T-cell (primary cell): ENCODE measurements at regions of chr18 and their contacts with region 1.

Region 1: GRCh38 chr18:62883937-62884735 is 168.8 kb downstream of the PHLPP1 start:
- DNase-seq: no peak
- ATAC-seq: no peak
- H3K4me3 ChIP-seq: no peak overlapping the region
- H3K4me3 Mint-ChIP-seq: no peak overlapping the region
- H3K27ac ChIP-seq: no peak overlapping the region
- H3K27ac Mint-ChIP-seq: no peak overlapping the region
- H3K4me1 ChIP-seq: peaks cover 3 to 4% of the 10 kb centered on the region in 2 experiments
- H3K4me1 Mint-ChIP-seq: peaks cover 8 to 12% (median 10%) of the 10 kb centered on the region in 3 donors
- H3K27me3 ChIP-seq: no peaks in the 10 kb centered on the region
- H3K27me3 Mint-ChIP-seq: no peaks in the 10 kb centered on the region

Region 2: GRCh38 chr18:62300359-62300963 is 583.7 kb before region 1 on chr18:
- CTCF ChIA-PET with region 1: no interaction called
- POLR2A ChIA-PET with region 1: interaction called in 1 of 2 experiments, 10 read pairs
- DNase-seq: peak in 1 of 35 experiments; percentile 1
- ATAC-seq: peak in 2 of 4 experiments; percentile 17 to 70
- H3K4me3 ChIP-seq: no peak overlapping the region
- H3K4me3 Mint-ChIP-seq: peak overlapping the region in 1 of 3 donors; percentile 44
- H3K27ac ChIP-seq: no peak overlapping the region
- H3K27ac Mint-ChIP-seq: peak overlapping the region; percentile 50 to 82
- H3K4me1 ChIP-seq: peaks cover 0 to 14% of the 10 kb centered on the region in 2 experiments
- H3K4me1 Mint-ChIP-seq: peaks cover 12 to 22% (median 20%) of the 10 kb centered on the region in 3 donors
- H3K27me3 ChIP-seq: no peaks in the 10 kb centered on the region
- H3K27me3 Mint-ChIP-seq: no peaks in the 10 kb centered on the region

Region 3: DNA sequence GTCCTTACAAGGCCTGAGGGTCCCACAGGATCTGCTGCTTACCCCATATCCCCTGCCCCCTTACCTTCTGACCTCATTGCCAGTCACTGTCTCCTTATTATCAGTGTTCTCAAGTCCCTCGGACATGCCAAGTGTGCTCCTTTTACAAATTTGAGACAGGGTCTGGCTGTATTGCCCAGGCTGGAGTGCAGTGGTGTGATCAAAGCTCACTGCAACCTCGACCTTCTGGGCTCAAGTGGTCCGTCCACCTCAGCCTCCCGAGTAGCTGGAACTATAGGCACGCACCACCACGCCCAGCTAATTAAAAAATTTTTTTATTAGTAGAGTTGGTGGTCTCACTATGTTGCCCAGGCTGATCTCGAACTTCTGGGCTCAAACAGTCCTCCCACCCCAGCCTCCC is 27.8 kb before region 1 on chr18:
- CTCF ChIA-PET with region 1: no interaction called
- POLR2A ChIA-PET with region 1: no interaction called
- DNase-seq: no peak
- ATAC-seq: no peak
- H3K4me3 ChIP-seq: no peak overlapping the region
- H3K4me3 Mint-ChIP-seq: no peak overlapping the region
- H3K27ac ChIP-seq: no peak overlapping the region
- H3K27ac Mint-ChIP-seq: no peak overlapping the region
- H3K4me1 ChIP-seq: no peaks in the 10 kb centered on the region
- H3K4me1 Mint-ChIP-seq: no peaks in the 10 kb centered on the region
- H3K27me3 ChIP-seq: no peaks in the 10 kb centered on the region
- H3K27me3 Mint-ChIP-seq: no peaks in the 10 kb centered on the region

Region 4: GRCh38 chr18:62938487-62938886 is 54.4 kb after region 1 on chr18:
- CTCF ChIA-PET with region 1: no interaction called
- POLR2A ChIA-PET with region 1: interaction called in 1 of 2 experiments, 14 read pairs
- DNase-seq: no peak
- ATAC-seq: no peak
- H3K4me3 ChIP-seq: no peak overlapping the region
- H3K4me3 Mint-ChIP-seq: no peak overlapping the region
- H3K27ac ChIP-seq: no peak overlapping the region
- H3K27ac Mint-ChIP-seq: no peak overlapping the region
- H3K4me1 ChIP-seq: no peaks in the 10 kb centered on the region
- H3K4me1 Mint-ChIP-seq: peaks cover 4 to 6% (median 5%) of the 10 kb centered on the region in 3 donors
- H3K27me3 ChIP-seq: no peaks in the 10 kb centered on the region
- H3K27me3 Mint-ChIP-seq: no peaks in the 10 kb centered on the region

Region 5: GRCh38 chr18:63329431-63330145 is 445.5 kb after region 1 on chr18:
- CTCF ChIA-PET with region 1: interaction called in 1 of 2 experiments, 6 read pairs
- POLR2A ChIA-PET with region 1: interaction called in 1 of 2 experiments, 11 read pairs
- DNase-seq: no peak
- ATAC-seq: no peak
- H3K4me3 ChIP-seq: no peak overlapping the region
- H3K4me3 Mint-ChIP-seq: no peak overlapping the region
- H3K27ac ChIP-seq: no peak overlapping the region
- H3K27ac Mint-ChIP-seq: no peak overlapping the region
- H3K4me1 ChIP-seq: no peaks in the 10 kb centered on the region
- H3K4me1 Mint-ChIP-seq: no peaks in the 10 kb centered on the region
- H3K27me3 ChIP-seq: no peaks in the 10 kb centered on the region
- H3K27me3 Mint-ChIP-seq: no peaks in the 10 kb centered on the region

Region 6: DNA sequence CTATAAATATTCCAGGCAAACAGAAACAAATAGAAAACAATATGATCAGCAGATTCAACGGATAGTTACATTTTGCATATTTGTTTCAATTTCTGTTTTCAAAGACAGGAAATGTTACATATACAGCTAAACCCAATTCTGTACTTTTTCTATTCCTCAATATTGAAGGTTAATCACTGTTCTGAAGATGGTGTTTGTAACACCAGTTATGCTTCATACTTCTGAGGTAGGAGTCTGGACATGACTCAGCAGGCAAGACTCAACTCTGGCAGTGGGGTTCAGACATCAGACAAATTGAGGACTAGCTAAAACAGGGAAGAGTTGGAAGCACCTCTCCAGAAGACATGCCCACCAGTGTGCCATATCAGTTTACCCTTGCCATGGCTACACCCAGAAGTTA is 719.6 kb after region 1 on chr18:
- CTCF ChIA-PET with region 1: no interaction called
- POLR2A ChIA-PET with region 1: no interaction called
- DNase-seq: no peak
- ATAC-seq: no peak
- H3K4me3 ChIP-seq: no peak overlapping the region
- H3K4me3 Mint-ChIP-seq: no peak overlapping the region
- H3K27ac ChIP-seq: no peak overlapping the region
- H3K27ac Mint-ChIP-seq: no peak overlapping the region
- H3K4me1 ChIP-seq: no peaks in the 10 kb centered on the region
- H3K4me1 Mint-ChIP-seq: no peaks in the 10 kb centered on the region
- H3K27me3 ChIP-seq: no peaks in the 10 kb centered on the region
- H3K27me3 Mint-ChIP-seq: peaks cover 0 to 14% of the 10 kb centered on the region in 2 donors